ENCODE measurements at regions of chr1 and their contacts with region 1.

Region 1: DNA sequence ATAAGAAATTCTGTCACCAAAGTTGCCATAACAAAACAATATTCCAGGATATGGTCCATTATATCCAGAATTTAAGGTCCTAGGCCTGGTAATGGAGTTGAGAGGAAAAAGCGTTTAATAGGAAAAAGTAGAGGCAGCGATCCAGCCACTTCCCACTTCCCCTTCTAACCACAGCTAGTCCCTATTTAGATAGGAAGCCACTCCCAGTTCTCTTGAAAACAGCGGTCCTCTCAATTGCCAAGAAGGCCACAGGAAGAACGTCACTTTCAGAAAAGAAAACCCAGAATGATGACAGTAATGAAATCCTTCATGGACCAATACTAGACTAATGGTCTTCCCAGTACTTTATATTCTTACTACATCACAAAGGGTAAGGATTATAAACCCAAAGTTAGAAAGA is 38.6 kb downstream of the ABL2 start:
- DNase-seq: no peak
- ATAC-seq: peak; percentile 12 to 32
- H3K4me3 ChIP-seq: no peak overlapping the region
- H3K27ac ChIP-seq: peak overlapping the region; percentile 49 to 60 (median 50)
- H3K4me1 ChIP-seq: peaks cover 11 to 13% of the 10 kb centered on the region in 2 donors
- H3K27me3 ChIP-seq: no peaks in the 10 kb centered on the region
- CTCF ChIP-seq: no peak
- POLR2A ChIP-seq: no peak

Region 2: DNA sequence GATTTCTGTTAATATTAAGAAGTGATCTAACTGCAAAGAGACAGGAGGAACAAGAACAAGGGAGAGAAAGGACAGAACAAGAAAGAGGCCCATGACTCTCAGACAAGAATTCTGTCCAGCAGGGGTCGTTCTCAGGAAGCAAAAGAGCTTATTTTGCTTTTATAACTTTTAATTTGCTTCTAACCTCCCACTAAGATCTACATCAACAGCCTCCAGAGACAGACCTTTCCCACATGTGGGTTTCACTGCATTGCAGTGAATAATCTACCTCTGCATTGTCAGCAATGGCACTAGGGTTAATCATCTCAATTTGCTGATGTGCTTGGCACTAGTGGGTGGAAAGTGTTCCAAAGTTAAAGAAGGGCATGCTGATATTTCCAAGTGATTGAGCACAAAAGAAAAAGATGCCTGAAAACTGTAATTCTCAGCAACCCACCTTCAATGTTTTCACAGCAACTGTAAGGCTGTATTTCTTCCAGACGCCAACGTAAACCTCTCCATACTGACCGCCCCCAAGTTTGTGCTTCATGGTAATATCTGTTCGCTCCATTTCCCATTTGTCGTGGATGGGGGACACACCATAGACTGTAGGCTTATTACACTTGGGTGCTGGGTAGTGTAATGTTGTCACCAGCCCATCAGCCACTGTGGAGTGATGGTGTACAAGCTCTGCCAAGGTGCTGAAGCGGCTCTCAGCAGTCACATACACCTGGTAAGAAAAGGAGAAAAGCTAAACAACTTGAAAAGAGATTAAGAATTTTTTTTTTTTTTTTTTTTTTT is 69.5 kb before region 1 on chr1:
- in situ Hi-C with region 1: loop called in 1 of 4 experiments (anchors 5 kb)
- intact Hi-C with region 1: loop called (anchors 5 kb)
- DNase-seq: no peak
- ATAC-seq: peak in 1 of 2 donors; percentile 51
- H3K4me3 ChIP-seq: no peak overlapping the region
- H3K27ac ChIP-seq: no peak overlapping the region
- H3K4me1 ChIP-seq: no peaks in the 10 kb centered on the region
- H3K27me3 ChIP-seq: no peaks in the 10 kb centered on the region
- CTCF ChIP-seq: peak; percentile 44 to 60 (median 52)
- POLR2A ChIP-seq: no peak

Region 3: DNA sequence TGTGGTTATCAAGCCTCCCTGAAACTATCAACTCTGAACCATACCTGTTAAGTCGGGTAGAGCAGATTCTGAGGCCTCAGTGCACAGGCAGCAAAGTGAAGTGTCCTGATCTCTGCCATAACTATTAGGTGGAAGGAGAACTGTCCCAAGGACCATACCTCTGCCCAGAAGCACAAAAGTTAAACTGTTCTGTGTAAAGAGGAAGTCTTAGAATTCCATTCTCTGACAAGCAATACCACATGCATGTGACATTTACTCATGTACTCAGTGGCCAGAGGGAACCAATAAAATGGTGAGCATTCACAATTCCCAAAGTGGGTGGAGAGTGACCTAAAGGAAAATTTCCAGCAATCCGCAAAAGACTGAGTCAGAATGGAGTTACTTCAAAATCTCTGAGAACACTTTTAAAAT is 48.0 kb before region 1 on chr1:
- in situ Hi-C with region 1: no loop called
- intact Hi-C with region 1: loop called (anchors 5 kb)
- DNase-seq: no peak
- ATAC-seq: peak; percentile 77 to 83
- H3K4me3 ChIP-seq: peak overlapping the region in 2 of 4 donors; percentile 21 to 26
- H3K27ac ChIP-seq: peak overlapping the region; percentile 38 to 58 (median 50)
- H3K4me1 ChIP-seq: peaks cover 2 to 6% of the 10 kb centered on the region in 2 donors
- H3K27me3 ChIP-seq: no peaks in the 10 kb centered on the region
- CTCF ChIP-seq: no peak
- POLR2A ChIP-seq: peak; percentile 53 to 63

Region 4: DNA sequence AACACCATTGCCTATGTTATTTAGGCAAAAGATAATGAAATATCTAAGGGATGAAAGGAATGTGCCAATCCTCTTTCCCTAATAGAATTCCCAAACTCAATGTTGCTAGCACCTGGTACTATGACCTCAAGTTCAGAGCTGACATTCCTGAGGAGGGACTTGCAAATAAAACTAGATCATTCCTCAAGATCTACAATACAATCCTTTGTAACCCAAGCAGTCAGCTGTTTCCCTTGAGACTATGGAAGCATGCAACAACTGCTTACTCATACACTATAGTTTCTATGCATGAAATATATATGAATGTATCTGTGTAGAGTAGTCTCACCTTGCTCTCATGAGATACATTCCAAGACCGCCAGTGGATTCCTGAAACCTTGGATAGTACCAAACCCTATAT is 26.4 kb before region 1 on chr1:
- in situ Hi-C with region 1: no loop called
- intact Hi-C with region 1: loop called (anchors 2 kb)
- DNase-seq: no peak
- ATAC-seq: no peak
- H3K4me3 ChIP-seq: no peak overlapping the region
- H3K27ac ChIP-seq: no peak overlapping the region
- H3K4me1 ChIP-seq: no peaks in the 10 kb centered on the region
- H3K27me3 ChIP-seq: no peaks in the 10 kb centered on the region
- CTCF ChIP-seq: no peak
- POLR2A ChIP-seq: no peak

Region 5: GRCh38 chr1:179175011-179175841 is 15.6 kb before region 1 on chr1:
- in situ Hi-C with region 1: no loop called
- intact Hi-C with region 1: loop called (anchors 2 kb)
- DNase-seq: peak; percentile 13 to 64
- ATAC-seq: peak; percentile 91
- H3K4me3 ChIP-seq: peak overlapping the region in 1 of 4 donors; percentile 21
- H3K27ac ChIP-seq: peak overlapping the region; percentile 65 to 82 (median 76)
- H3K4me1 ChIP-seq: peaks cover 32 to 35% of the 10 kb centered on the region in 2 donors
- H3K27me3 ChIP-seq: no peaks in the 10 kb centered on the region
- CTCF ChIP-seq: no peak
- POLR2A ChIP-seq: no peak

Measured in gastrocnemius medialis (tissue), 4 donors.